HAP-1 (cell line): ENCODE measurements at regions of chr10 and their contacts with region 1.

Region 1: DNA sequence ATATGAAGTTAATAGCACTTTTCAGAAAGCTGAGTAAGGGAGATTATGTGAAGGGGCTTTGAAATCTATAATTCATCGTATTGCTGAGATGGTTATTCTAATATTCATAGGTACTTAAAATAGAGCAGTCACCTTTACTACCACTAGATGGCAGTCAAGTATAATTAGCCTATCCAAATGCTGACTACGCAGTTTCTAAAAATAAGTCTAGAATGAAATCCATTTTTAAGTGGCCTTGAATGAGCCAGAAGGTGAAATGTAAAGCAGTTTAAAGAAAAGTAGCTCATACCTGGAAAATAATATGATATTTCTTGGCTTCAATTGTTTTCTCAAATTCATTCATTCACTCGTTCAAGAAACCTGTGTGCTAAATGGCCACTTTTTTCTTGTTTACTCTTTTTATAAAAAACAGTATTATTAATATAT is 1277.1 kb downstream of the GATA3 start:
- DNase-seq: peak in 1 of 2 experiments; percentile 57
- H3K4me3 ChIP-seq: no peak overlapping the region
- H3K4me1 ChIP-seq: no peaks in the 10 kb centered on the region
- H3K27me3 ChIP-seq: no peaks in the 10 kb centered on the region

Region 2: DNA sequence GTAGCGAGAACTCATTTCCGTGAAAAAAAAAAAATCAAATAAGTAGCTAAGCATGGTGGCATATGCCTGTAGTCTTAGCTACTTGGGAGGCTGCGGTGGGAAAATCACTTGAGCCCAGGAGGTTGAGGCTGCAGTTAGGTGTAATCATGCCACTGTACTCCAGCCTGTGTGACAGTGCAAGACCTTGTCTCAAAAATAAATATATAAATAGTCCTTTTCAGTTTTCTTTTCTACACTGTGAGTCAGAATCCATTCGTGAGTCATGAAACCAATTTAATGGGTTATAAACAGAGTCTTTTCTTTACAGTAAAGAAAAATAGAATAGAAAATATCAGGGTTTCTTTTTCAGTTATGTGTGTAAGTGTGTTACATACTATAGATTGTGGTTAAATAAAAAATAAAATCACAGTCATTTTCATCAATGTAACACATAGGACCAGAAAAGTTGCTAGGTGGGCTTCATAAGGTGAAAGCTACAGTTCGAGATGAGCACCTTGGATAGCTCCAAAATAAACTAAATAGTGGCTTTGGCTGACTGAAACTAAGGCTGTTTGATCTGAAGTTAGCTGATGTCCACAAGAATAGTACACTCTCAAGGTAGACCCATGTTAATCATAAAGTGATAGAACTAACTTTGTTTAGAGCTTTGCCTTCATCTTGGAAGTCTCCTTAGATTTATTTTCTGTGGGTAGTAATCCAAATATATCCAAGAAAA is 496.0 kb before region 1 on chr10:
- in situ Hi-C with region 1: no loop called
- DNase-seq: no peak
- H3K4me3 ChIP-seq: no peak overlapping the region
- H3K4me1 ChIP-seq: no peaks in the 10 kb centered on the region
- H3K27me3 ChIP-seq: no peaks in the 10 kb centered on the region

Region 3: GRCh38 chr10:8861717-8862496 is 469.7 kb before region 1 on chr10:
- in situ Hi-C with region 1: no loop called
- DNase-seq: no peak
- H3K4me3 ChIP-seq: no peak overlapping the region
- H3K4me1 ChIP-seq: no peaks in the 10 kb centered on the region
- H3K27me3 ChIP-seq: no peaks in the 10 kb centered on the region

Region 4: DNA sequence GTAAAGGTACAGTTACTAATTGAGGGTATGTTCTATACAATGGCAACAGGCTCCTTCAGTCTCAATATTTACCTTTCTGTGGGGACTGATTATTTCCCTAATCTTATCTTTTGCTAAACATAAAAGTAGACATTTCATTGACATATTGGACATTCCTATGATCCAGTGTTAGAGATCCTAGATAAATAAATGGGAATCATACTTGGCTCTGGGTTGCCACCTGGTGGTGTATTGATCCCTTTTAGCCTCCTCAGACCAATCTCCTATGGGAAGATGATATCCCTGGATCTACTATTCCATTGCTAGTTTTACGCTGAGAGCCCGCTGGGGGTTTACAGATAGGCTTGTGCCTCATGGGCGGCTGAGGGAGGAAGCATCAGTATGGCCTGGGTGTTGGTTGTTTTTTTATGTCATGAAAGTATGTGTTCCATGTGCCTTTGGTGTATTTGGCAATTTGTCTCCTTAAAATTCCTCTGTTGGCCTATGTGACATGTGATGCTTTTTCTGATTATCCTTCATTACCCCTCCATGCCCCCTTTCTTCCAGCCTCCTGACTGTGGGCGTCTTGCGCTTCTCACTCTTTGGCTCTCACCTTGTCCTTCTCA is 1704.9 kb after region 1 on chr10:
- in situ Hi-C with region 1: loop called (anchors 25 kb)
- DNase-seq: peak; percentile 70 to 74
- H3K4me3 ChIP-seq: no peak overlapping the region
- H3K4me1 ChIP-seq: no peaks in the 10 kb centered on the region; the same call in 1 of the 2 replicates
- H3K27me3 ChIP-seq: no peaks in the 10 kb centered on the region

Region 5: DNA sequence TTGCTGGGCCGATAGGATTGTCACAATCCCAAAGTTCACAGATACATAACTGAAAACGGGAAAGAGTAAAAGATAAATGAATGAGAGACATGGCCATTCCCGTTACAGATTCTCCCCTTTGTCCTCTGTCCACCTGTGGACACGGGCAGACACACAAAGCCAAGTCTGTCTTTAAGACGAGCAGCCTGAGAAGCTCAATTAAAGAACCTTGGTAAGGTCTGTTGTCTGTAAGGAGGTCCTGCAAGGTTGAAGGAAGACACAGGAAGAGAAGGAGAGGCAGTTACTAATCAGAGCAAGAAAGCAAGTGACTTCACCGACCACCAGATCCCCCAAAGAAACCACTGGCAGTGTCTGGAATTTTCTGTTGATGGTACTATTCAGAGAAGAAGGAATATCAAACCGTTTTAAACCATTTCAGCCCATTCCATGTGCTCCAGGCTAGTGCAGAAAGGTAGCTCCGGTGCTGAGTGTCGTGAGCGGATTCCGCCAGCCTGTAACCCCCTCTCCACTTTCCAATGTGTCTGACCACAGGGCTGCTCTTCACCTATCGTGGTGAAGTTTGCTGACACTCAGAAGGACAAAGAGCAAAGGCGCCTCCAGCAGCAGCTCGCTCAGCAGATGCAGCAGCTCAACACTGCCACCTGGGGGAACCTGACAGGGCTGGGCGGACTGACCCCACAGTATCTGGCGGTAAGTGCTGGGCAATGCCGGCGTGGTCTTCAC is 1938.7 kb after region 1 on chr10:
- in situ Hi-C with region 1: loop called (anchors 25 kb)
- DNase-seq: peak; percentile 77 to 93
- H3K4me3 ChIP-seq: no peak overlapping the region
- H3K4me1 ChIP-seq: peaks cover 11% of the 10 kb centered on the region
- H3K27me3 ChIP-seq: no peaks in the 10 kb centered on the region